Dendritic cell treated with granulocyte-macrophage colony-stimulating factor and Interleukin-4, amounts not matched to agents 40 ng/mL and 50 ng/mL, for 4 days (primary cell): ENCODE measurements at regions of chr2 and their contacts with region 1.

Region 1: GRCh38 chr2:152664703-152665102 is 52.6 kb downstream of the PRPF40A start:
- H3K4me3 Mint-ChIP-seq: no peak overlapping the region
- H3K27ac Mint-ChIP-seq: no peak overlapping the region
- H3K4me1 Mint-ChIP-seq: no peaks in the 10 kb centered on the region
- H3K27me3 Mint-ChIP-seq: no peaks in the 10 kb centered on the region

Region 2: DNA sequence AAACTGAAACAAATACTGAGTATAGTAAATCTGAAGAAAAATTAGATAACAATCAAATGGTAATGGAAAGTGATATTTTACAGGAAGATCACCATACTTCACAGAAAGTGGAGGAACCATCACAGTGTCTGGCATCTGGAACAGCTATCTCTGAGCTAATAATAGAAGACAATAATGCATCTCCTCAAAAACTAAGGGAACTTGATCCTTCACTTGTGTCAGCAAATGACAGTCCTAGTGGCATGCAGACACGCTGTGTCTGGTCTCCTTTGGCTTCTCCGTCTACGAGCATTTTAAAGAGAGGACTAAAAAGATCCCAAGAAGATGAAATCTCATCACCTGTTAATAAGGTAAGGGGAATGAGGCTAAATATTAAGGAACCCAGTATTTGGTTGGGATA is 1198.9 kb before region 1 on chr2:
- intact Hi-C with region 1: loop called (anchors 10 kb)
- H3K4me3 Mint-ChIP-seq: no peak overlapping the region
- H3K27ac Mint-ChIP-seq: no peak overlapping the region
- H3K4me1 Mint-ChIP-seq: no peaks in the 10 kb centered on the region
- H3K27me3 Mint-ChIP-seq: no peaks in the 10 kb centered on the region

Region 3: DNA sequence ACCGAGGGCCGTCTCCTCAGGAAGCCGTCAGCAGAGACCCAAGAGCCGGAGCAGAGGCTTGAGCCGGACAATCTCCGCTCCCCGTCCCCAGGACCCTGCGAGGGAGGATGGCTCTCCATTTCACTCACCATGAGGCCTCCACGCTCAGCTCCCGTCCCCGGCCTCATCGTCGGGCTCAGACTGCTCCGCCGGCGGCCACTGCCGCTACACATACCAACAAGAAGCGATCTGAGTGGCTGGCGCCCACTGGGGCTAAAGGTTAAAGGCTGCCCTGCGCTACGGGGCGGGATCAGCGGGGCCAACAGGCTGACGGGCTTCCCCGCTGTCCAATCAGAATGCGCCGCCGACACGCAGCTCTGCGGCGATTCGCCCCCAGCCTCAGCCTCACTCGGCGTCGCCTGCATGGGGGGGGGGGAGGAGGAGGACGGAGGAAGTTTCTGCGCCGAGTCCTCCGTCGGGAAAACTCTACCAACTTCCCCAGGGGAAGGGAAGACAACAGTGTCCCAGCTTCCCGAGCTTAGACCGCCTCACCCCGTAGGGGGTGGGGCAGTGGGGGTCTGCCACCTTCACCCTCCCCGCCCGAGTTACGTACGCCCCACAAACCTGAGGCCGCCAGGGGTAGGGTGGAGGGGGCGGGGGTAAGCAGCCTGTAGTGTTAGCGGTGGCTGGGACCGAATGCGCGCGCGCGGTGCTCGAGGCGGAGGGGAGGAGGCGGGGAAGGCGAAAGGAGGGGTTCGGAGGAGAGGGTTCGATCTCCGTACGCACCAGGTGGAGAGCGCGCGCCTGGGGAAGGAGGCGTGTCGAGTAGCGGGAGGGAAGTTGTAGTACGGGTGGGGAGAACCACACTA is 52.7 kb after region 1 on chr2 and contains the start of gene PRPF40A:
- intact Hi-C with region 1: no loop called
- H3K4me3 Mint-ChIP-seq: peak within 1 kb of the TSS; percentile 92
- H3K27ac Mint-ChIP-seq: peak within 1 kb of the TSS; percentile 96
- H3K4me1 Mint-ChIP-seq: peaks cover 31% of the 10 kb centered on the region
- H3K27me3 Mint-ChIP-seq: no peaks in the 10 kb centered on the region

Region 4: GRCh38 chr2:152755029-152755428 is 90.3 kb after region 1 on chr2:
- intact Hi-C with region 1: no loop called
- H3K4me3 Mint-ChIP-seq: no peak overlapping the region
- H3K27ac Mint-ChIP-seq: no peak overlapping the region
- H3K4me1 Mint-ChIP-seq: no peaks in the 10 kb centered on the region
- H3K27me3 Mint-ChIP-seq: no peaks in the 10 kb centered on the region